ENCODE measurements at regions of chr9 and their contacts with region 1.

Region 1: DNA sequence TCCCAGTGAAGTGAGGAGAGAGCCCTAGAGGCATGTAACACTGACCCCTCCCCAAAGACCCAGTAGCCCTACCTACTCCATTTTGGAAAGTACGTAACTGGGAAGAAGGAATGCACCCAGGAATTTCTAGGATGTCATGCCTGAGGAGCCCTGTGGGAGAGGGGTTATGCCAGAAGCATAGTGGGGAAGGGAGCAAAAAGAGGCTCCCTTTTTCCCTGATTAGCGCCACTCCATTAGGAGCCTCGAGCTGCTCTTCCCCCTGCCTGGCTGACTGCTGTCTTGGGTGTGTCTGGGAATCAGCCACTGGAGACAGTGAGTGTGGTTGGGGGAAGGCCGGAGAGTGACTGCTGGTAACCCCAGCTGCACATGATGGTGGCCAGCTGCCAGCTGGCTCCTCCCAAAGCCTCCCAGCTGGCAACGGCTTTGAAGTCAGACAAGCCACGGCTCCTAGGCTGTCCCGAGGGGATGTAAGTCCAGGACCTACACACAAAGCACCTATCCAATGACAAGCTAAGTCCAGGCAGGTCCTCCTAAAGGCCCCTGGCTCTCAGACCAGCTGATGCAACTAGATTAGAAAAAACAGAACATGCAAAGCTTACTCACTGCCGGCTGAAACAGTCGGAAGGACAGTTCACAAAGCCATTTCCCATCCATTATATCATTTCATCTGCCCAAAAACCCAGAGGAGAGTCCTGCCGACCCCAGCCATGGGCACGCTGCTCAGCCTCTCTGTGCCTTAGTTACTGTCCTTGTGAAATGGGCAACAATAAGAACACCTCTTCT is 136.6 kb upstream of the ABCA1 start:
- DNase-seq: peak; percentile 99
- H3K4me3 ChIP-seq: no peak overlapping the region
- H3K27ac ChIP-seq: peak overlapping the region; percentile 83 to 87 (median 87)
- H3K4me1 ChIP-seq: peaks cover 0 to 38% (median 26%) of the 10 kb centered on the region in 4 donors
- H3K27me3 ChIP-seq: no peaks in the 10 kb centered on the region
- CTCF ChIP-seq: no peak
- EP300 ChIP-seq: peak; percentile 68 to 89 (median 86)
- POLR2A ChIP-seq: peak; percentile 24 to 47

Region 2: DNA sequence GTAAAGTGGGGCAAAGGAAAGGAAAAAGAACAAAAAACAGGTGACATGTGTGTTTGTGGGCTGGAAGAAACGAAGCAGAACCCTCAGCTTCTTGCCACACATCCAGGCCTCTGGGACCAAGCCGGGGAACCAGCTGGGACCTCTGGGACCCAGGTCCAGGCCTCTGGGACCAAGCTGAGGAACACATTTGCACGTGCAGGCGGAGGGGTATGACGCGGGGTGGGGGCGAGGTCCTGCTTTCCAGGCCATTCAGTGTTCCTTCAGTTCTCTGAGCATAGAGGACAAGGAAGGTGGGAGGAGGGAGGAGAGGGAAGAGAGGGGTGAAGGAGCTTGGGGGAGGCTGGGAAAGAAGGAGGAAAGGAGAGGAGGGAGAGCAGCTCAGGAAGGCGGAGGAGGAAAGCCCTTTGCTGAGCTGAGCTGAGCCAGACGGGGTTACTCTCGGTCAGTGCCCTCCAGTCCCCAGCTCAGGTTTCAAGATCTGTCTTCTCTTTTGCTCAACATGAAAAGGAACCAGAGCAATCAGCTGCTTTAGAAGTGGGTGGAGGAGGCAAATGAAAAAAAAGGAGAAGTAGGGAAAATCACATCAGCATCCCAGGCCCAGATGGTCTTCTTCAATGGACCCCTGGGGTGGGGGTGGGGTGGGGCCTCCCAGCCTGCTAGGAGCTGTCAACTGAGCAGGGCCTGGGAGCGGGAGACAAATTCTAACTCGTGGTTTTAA is 195.7 kb before region 1 on chr9:
- intact Hi-C with region 1: loop called (anchors 5 kb)
- DNase-seq: peak; percentile 88
- H3K4me3 ChIP-seq: no peak overlapping the region
- H3K27ac ChIP-seq: peak overlapping the region; percentile 51 to 85 (median 80)
- H3K4me1 ChIP-seq: peaks cover 0 to 94% (median 91%) of the 10 kb centered on the region in 4 donors
- H3K27me3 ChIP-seq: no peaks in the 10 kb centered on the region
- CTCF ChIP-seq: no peak
- EP300 ChIP-seq: peak in 2 of 4 donors; percentile 33 to 49
- POLR2A ChIP-seq: no peak

Region 3: DNA sequence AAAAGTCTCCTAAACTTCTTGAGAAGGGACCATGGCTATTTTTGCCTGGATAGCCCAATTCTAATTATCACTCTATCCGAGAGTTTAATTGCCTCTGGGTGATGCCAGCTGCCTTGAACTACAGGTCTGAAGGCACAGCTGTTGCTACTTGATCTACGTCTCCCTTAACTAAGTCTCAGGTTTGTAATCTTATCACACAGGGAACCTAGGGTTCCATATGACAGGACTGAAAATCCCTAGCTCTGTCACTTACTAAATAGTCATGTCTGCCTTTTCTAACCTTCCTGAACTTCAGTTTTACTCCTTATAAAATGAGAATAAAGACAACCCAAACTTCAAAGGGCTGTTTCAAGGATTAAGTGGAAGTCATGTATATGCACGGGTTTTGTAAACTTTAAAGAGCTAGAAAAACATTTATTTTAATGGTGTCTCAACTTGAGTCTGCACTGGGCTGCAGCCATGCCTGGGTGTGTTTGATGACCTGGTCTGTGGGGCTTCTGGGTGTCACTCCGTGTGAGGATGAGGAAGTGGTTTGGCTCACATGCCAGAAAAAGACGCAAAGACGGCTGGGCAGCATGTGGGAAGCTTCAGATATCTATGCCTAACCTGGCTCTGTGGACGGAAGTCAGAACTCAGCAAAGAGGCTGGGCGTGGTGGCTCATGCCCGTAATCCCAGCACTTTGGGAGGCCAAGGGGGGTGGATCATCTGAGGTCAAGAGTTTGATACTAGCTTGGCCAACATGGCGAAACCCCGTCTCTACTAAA is 50.6 kb after region 1 on chr9:
- intact Hi-C with region 1: no loop called
- DNase-seq: peak; percentile 76
- H3K4me3 ChIP-seq: no peak overlapping the region
- H3K27ac ChIP-seq: no peak overlapping the region
- H3K4me1 ChIP-seq: peaks cover 0 to 42% (median 35%) of the 10 kb centered on the region in 4 donors
- H3K27me3 ChIP-seq: no peaks in the 10 kb centered on the region
- CTCF ChIP-seq: no peak
- EP300 ChIP-seq: no peak
- POLR2A ChIP-seq: no peak

Region 4: DNA sequence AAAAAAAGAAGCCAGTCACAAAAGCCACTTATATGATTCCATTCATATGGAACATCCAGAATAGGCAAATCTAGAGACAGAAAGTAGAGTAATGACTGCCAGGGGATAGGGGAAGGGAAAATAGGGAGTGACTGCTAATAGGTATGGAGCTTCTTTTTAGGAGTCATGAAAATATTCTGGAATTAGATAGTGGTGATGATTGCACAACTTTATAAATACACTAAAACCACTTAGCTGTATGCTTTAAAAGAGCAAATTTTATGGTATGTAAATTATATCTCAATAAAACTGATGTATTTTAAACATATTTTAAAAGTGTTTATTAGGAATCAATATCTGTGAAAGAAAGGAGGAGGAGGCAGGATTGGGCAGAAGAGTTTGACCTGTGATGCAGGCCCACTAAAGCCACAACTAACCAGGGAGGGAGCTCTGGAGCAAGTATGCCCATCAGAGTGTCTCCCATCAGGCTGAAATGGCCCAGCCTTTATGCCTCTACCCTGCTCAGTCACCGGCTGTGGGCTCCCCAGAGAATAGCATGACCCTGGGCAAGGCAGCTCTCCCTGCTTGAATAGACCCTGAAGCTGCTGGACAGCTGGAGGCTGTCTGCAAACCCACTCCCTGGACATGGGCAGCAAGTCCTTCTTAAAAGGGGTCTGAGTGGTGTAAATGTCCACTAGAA is 84.0 kb after region 1 on chr9:
- intact Hi-C with region 1: loop called (anchors 5 kb)
- DNase-seq: no peak
- H3K4me3 ChIP-seq: no peak overlapping the region
- H3K27ac ChIP-seq: no peak overlapping the region
- H3K4me1 ChIP-seq: peaks cover 0 to 47% (median 31%) of the 10 kb centered on the region in 4 donors
- H3K27me3 ChIP-seq: no peaks in the 10 kb centered on the region
- CTCF ChIP-seq: no peak
- EP300 ChIP-seq: no peak
- POLR2A ChIP-seq: no peak

Measured in sigmoid colon (tissue), 7 donors.